Calu3 (cell line): ENCODE measurements at regions of chr1 and their contacts with region 1.

Region 1: GRCh38 chr1:192700834-192701271 is 64.9 kb downstream of the RGS13 start:
- DNase-seq: peak; percentile 38
- H3K4me3 Mint-ChIP-seq: no peak overlapping the region
- H3K27ac Mint-ChIP-seq: peak overlapping the region; percentile 86
- H3K4me1 Mint-ChIP-seq: peaks cover 14% of the 10 kb centered on the region
- H3K27me3 Mint-ChIP-seq: no peaks in the 10 kb centered on the region
- CTCF ChIP-seq: no peak

Region 2: DNA sequence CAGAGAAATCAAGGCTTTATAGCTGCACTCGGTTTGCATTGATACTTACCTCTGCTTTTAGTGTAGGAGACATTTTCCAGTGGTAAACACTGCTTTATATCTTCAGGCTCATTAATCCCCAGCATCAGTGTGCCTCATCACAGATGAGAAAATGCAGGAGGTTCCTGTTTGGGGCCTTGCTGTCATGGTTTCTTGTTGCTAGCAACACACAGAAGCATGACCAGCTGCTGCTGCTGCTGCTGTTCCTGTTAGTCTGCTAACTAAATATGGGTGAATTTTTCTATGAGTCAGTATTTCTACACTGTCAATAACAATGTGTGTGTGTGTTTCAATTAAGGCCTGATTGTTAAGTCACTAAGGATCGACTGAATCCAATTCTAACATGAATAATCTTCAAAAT is 211.1 kb before region 1 on chr1:
- CTCF ChIA-PET with region 1: no interaction called
- intact Hi-C with region 1: loop called (anchors 2 kb)
- DNase-seq: peak; percentile 64
- H3K4me3 Mint-ChIP-seq: no peak overlapping the region
- H3K27ac Mint-ChIP-seq: peak overlapping the region; percentile 82
- H3K4me1 Mint-ChIP-seq: peaks cover 20% of the 10 kb centered on the region
- H3K27me3 Mint-ChIP-seq: no peaks in the 10 kb centered on the region
- CTCF ChIP-seq: no peak

Region 3: GRCh38 chr1:192633533-192634253 is 67.2 kb before region 1 on chr1:
- CTCF ChIA-PET with region 1: no interaction called
- intact Hi-C with region 1: loop called (anchors 5 kb)
- DNase-seq: no peak
- H3K4me3 Mint-ChIP-seq: no peak overlapping the region
- H3K27ac Mint-ChIP-seq: no peak overlapping the region
- H3K4me1 Mint-ChIP-seq: peaks cover 35% of the 10 kb centered on the region
- H3K27me3 Mint-ChIP-seq: no peaks in the 10 kb centered on the region
- CTCF ChIP-seq: no peak

Region 4: GRCh38 chr1:192639607-192640368 is 61.1 kb before region 1 on chr1:
- CTCF ChIA-PET with region 1: interaction called, 3 read pairs
- intact Hi-C with region 1: loop called (anchors 2 kb)
- DNase-seq: no peak
- H3K4me3 Mint-ChIP-seq: no peak overlapping the region
- H3K27ac Mint-ChIP-seq: peak overlapping the region; percentile 9
- H3K4me1 Mint-ChIP-seq: no peaks in the 10 kb centered on the region
- H3K27me3 Mint-ChIP-seq: no peaks in the 10 kb centered on the region
- CTCF ChIP-seq: no peak

Region 5: GRCh38 chr1:192787914-192788585 is 87.2 kb after region 1 on chr1:
- CTCF ChIA-PET with region 1: no interaction called
- intact Hi-C with region 1: loop called (anchors 5 kb)
- DNase-seq: no peak
- H3K4me3 Mint-ChIP-seq: no peak overlapping the region
- H3K27ac Mint-ChIP-seq: no peak overlapping the region
- H3K4me1 Mint-ChIP-seq: peaks cover 26% of the 10 kb centered on the region
- H3K27me3 Mint-ChIP-seq: no peaks in the 10 kb centered on the region
- CTCF ChIP-seq: no peak

Region 6: GRCh38 chr1:193019442-193020026 is 318.7 kb after region 1 on chr1:
- CTCF ChIA-PET with region 1: no interaction called
- intact Hi-C with region 1: loop called (anchors 5 kb)
- DNase-seq: peak; percentile 27
- H3K4me3 Mint-ChIP-seq: no peak overlapping the region
- H3K27ac Mint-ChIP-seq: no peak overlapping the region
- H3K4me1 Mint-ChIP-seq: no peaks in the 10 kb centered on the region
- H3K27me3 Mint-ChIP-seq: no peaks in the 10 kb centered on the region
- CTCF ChIP-seq: peak; percentile 58